MCF 10A (cell line): ENCODE measurements at regions of chr20 and their contacts with region 1.

Region 1: DNA sequence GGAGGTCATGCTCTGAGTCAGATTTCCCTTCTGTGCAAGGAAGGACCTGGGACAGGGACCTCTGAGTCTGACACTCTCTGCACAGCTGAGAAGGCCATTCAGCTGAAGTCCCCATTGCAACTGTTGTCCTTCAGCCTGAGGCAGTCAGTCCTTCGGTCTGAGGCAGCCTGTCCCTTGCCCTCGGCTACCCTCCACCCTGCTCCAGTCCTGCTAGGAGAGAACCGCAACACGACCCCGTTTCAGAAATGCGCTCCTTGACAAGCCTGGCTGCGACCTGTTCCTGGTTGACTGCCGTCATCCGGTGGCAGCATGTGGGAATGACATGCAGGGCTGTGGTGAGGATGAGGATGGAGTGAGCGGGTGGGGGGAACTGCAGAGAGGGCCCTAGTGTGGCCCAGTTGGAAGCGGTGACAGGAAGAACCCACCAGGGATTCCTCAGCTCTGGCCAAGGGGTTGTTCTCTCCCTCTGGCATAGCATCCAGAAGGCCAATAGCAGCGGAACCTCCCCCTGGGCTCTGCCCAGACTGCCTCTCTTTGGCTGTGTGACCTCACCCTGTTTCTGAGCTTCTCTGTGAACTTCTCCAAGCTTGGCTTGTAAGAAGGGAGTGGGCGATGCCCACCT is 40.3 kb upstream of the ANGPT4 start:
- DNase-seq: peak; percentile 72
- H3K4me3 Mint-ChIP-seq: no peak overlapping the region
- H3K27ac Mint-ChIP-seq: no peak overlapping the region
- H3K4me1 Mint-ChIP-seq: no peaks in the 10 kb centered on the region
- H3K27me3 Mint-ChIP-seq: peaks cover 67% of the 10 kb centered on the region
- CTCF ChIP-seq: peak; percentile 100

Region 2: GRCh38 chr20:796921-797320 is 159.5 kb before region 1 on chr20:
- CTCF ChIA-PET with region 1: interaction called, 39 read pairs
- POLR2A ChIA-PET with region 1: no interaction called
- intact Hi-C with region 1: no loop called
- DNase-seq: no peak
- H3K4me3 Mint-ChIP-seq: no peak overlapping the region
- H3K27ac Mint-ChIP-seq: no peak overlapping the region
- H3K4me1 Mint-ChIP-seq: no peaks in the 10 kb centered on the region
- H3K27me3 Mint-ChIP-seq: peaks cover 52% of the 10 kb centered on the region
- CTCF ChIP-seq: no peak

Region 3: GRCh38 chr20:822651-823573 is 133.5 kb before region 1 on chr20:
- CTCF ChIA-PET with region 1: interaction called, 464 read pairs
- POLR2A ChIA-PET with region 1: interaction called, 3 read pairs
- intact Hi-C with region 1: no loop called
- DNase-seq: no peak
- H3K4me3 Mint-ChIP-seq: no peak overlapping the region
- H3K27ac Mint-ChIP-seq: no peak overlapping the region
- H3K4me1 Mint-ChIP-seq: no peaks in the 10 kb centered on the region
- H3K27me3 Mint-ChIP-seq: no peaks in the 10 kb centered on the region
- CTCF ChIP-seq: no peak

Region 4: GRCh38 chr20:844473-845225 is 111.8 kb before region 1 on chr20:
- CTCF ChIA-PET with region 1: interaction called, 16 read pairs
- POLR2A ChIA-PET with region 1: no interaction called
- intact Hi-C with region 1: no loop called
- DNase-seq: peak; percentile 90
- H3K4me3 Mint-ChIP-seq: peak overlapping the region; percentile 59
- H3K27ac Mint-ChIP-seq: peak overlapping the region; percentile 23
- H3K4me1 Mint-ChIP-seq: peaks cover 15% of the 10 kb centered on the region
- H3K27me3 Mint-ChIP-seq: no peaks in the 10 kb centered on the region
- CTCF ChIP-seq: no peak

Region 5: GRCh38 chr20:934186-934840 is 22.1 kb before region 1 on chr20:
- CTCF ChIA-PET with region 1: interaction called, 10 read pairs
- POLR2A ChIA-PET with region 1: no interaction called
- intact Hi-C with region 1: no loop called
- DNase-seq: no peak
- H3K4me3 Mint-ChIP-seq: no peak overlapping the region
- H3K27ac Mint-ChIP-seq: no peak overlapping the region
- H3K4me1 Mint-ChIP-seq: no peaks in the 10 kb centered on the region
- H3K27me3 Mint-ChIP-seq: no peaks in the 10 kb centered on the region
- CTCF ChIP-seq: no peak

Region 6: GRCh38 chr20:973785-974194 is 17.3 kb after region 1 on chr20:
- CTCF ChIA-PET with region 1: interaction called, 48 read pairs
- POLR2A ChIA-PET with region 1: no interaction called
- intact Hi-C with region 1: no loop called
- DNase-seq: peak; percentile 67
- H3K4me3 Mint-ChIP-seq: no peak overlapping the region
- H3K27ac Mint-ChIP-seq: no peak overlapping the region
- H3K4me1 Mint-ChIP-seq: peaks cover 8% of the 10 kb centered on the region
- H3K27me3 Mint-ChIP-seq: peaks cover 32% of the 10 kb centered on the region
- CTCF ChIP-seq: peak; percentile 48

Region 7: DNA sequence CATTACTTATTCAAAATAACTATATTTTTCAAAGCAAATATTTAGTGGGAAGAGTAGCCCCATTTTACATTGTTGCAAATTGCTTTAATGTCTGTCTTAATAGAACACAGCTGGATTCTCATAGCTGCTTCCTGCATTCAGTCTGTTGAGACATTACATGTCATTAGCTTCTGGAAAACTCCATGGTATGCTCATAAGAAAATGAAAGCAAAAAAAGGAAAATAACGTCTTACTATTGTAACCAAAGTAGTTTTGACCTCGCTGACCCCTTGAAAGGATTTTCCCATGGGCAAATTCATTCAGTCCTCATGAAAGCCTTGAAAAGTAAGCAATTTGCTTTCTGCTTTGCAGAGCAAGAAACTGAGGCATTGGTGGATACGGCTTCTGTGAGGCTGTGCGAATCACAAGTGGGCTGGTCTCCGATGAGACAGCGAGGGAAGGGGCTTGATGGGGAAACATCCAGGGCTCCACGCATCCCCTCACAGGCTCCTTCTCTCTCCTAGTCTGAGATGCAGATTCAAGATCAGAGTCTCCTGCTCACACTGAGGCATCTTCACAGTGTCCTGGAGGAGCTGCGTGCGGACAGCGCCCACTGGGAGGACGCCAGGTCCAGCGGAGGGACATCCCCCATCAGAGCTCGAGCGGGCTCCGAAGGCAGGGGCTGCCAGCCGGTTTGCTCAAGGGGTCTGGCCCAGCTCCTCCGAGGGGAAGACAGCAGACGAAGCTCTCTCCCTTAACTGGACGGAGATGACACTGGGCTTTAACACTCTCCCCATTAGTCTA is 250.1 kb after region 1 on chr20:
- CTCF ChIA-PET with region 1: interaction called, 56 read pairs
- POLR2A ChIA-PET with region 1: no interaction called
- intact Hi-C with region 1: loop called (anchors 5 kb)
- DNase-seq: no peak
- H3K4me3 Mint-ChIP-seq: no peak overlapping the region
- H3K27ac Mint-ChIP-seq: no peak overlapping the region
- H3K4me1 Mint-ChIP-seq: peaks cover 6% of the 10 kb centered on the region
- H3K27me3 Mint-ChIP-seq: peaks cover 20% of the 10 kb centered on the region
- CTCF ChIP-seq: no peak